ENCODE measurements at regions of chr1 and their contacts with region 1.

Region 1: DNA sequence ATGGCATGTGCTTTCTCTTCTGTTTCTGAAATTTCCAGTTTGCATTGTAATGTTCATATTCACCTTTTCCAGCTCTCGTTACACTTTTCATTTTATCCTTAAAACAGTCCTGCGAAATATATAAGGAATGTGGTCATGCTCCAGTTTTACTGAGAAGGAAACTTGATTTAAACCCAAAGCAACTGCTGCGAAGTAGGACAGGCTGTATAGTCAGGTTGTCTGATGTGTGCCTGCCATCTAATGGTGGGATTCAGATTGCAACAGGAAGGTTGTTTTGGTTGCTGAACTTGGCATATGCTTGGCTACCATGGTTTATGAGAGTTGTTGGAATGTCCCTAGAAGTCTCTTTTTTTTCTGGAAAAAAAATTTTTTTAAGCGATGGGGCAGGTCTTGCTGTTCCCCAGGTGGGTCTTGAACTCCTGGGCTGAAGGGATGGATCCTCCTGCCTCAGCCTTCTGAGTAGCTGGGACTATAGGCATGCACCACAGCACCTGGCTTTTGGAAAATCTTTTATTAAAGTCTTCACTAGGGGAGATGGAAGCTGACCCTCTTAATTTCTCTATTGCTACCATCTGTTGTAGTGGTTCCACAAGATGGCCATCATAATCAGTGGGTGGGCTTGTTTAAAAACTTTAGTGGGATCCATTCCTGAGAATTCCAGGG is 86.9 kb downstream of the UCK2 start:
- DNase-seq: peak; percentile 67
- ATAC-seq: peak; percentile 21
- H3K4me3 ChIP-seq: no peak overlapping the region
- H3K27ac ChIP-seq: no peak overlapping the region
- H3K4me1 ChIP-seq: peaks cover 63% of the 10 kb centered on the region
- H3K27me3 ChIP-seq: no peaks in the 10 kb centered on the region
- CTCF ChIP-seq: peak; percentile 92
- EP300 ChIP-seq: no peak
- POLR2A ChIP-seq: no peak
- RAD21 ChIP-seq: peak; percentile 85

Region 2: DNA sequence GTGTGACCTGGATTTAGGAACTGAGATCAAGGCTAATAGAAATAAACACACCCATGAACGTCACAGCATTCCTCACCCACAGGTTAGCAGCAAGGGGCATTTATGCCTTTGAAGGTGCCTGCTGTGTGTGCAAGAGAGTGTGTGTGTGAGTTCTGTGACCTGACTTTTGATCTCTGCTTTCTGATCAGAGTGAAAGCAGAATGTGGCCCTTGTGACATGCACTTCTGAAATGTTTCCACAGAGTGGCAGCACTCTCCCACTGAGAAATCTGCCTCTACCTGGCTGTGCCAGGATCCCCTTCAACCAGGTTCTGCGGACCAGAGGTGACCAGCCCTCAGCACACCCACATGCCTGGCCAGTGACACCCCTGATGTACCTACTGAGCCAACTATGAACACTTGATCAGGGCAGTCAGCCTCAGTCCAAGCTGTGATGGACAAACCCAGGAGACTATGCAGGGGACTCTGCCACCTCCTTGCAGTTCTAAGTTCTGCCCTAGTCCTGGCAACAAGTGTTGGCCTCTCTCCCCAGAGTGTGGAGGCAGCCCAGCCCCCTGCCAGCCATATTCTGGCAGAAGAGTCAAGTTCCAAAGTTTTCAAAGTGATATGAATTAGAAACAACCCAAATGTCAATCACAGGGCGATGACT is 510.3 kb before region 1 on chr1:
- CTCF ChIA-PET with region 1: no interaction called
- POLR2A ChIA-PET with region 1: no interaction called
- in situ Hi-C with region 1: loop called (anchors 25 kb)
- intact Hi-C with region 1: loop called (anchors 5 kb)
- DNase-seq: peak; percentile 58
- ATAC-seq: peak; percentile 91
- H3K4me3 ChIP-seq: no peak overlapping the region
- H3K27ac ChIP-seq: no peak overlapping the region
- H3K4me1 ChIP-seq: peaks cover 10% of the 10 kb centered on the region; the same call in 1 of the 2 replicates
- H3K27me3 ChIP-seq: no peaks in the 10 kb centered on the region
- CTCF ChIP-seq: peak; percentile 91
- EP300 ChIP-seq: no peak
- POLR2A ChIP-seq: no peak
- RAD21 ChIP-seq: peak; percentile 81

Region 3: GRCh38 chr1:165697881-165698760 is 216.1 kb before region 1 on chr1 and contains the start of gene ALDH9A1:
- CTCF ChIA-PET with region 1: interaction called, 6 read pairs
- POLR2A ChIA-PET with region 1: interaction called, 7 read pairs
- in situ Hi-C with region 1: loop called (anchors 5 kb)
- intact Hi-C with region 1: loop called (anchors 5 kb)
- DNase-seq: peak; percentile 32
- ATAC-seq: peak; percentile 94
- H3K4me3 ChIP-seq: peak within 1 kb of the TSS; percentile 83 to 96 (median 85)
- H3K27ac ChIP-seq: peak within 1 kb of the TSS; percentile 82
- H3K4me1 ChIP-seq: peaks cover 57% of the 10 kb centered on the region
- H3K27me3 ChIP-seq: no peaks in the 10 kb centered on the region; a peak in 2 of 5 replicates
- CTCF ChIP-seq: peak; percentile 74
- EP300 ChIP-seq: no peak
- POLR2A ChIP-seq: peak in 1 of 2 experiments; percentile 78; a peak in 2 of 4 replicates
- RAD21 ChIP-seq: no peak
- total RNA-seq, gene ALDH9A1: 38.5 and 52.7 TPM in 2 replicates

Region 4: GRCh38 chr1:165768513-165769394 is 145.5 kb before region 1 on chr1 and contains the start of gene TMCO1:
- CTCF ChIA-PET with region 1: no interaction called
- POLR2A ChIA-PET with region 1: interaction called, 31 read pairs
- in situ Hi-C with region 1: no loop called
- intact Hi-C with region 1: loop called (anchors 1 kb)
- DNase-seq: peak; percentile 99
- ATAC-seq: peak; percentile 100
- H3K4me3 ChIP-seq: peak within 1 kb of the TSS; percentile 66 to 88 (median 88)
- H3K27ac ChIP-seq: peak within 1 kb of the TSS; percentile 95
- H3K4me1 ChIP-seq: peaks cover 35% of the 10 kb centered on the region
- H3K27me3 ChIP-seq: no peaks in the 10 kb centered on the region; a peak in 1 of 5 replicates
- CTCF ChIP-seq: peak; percentile 48
- EP300 ChIP-seq: 0 out of 4 replicates have a peak, but pooled peaks of 1 of the 2 experiments have one; percentile 3
- POLR2A ChIP-seq: peak; percentile 83 to 88
- RAD21 ChIP-seq: peak; percentile 36; the same call in 1 of the 2 replicates
- total RNA-seq, gene TMCO1: 85.3 and 119 TPM in 2 replicates

Region 5: DNA sequence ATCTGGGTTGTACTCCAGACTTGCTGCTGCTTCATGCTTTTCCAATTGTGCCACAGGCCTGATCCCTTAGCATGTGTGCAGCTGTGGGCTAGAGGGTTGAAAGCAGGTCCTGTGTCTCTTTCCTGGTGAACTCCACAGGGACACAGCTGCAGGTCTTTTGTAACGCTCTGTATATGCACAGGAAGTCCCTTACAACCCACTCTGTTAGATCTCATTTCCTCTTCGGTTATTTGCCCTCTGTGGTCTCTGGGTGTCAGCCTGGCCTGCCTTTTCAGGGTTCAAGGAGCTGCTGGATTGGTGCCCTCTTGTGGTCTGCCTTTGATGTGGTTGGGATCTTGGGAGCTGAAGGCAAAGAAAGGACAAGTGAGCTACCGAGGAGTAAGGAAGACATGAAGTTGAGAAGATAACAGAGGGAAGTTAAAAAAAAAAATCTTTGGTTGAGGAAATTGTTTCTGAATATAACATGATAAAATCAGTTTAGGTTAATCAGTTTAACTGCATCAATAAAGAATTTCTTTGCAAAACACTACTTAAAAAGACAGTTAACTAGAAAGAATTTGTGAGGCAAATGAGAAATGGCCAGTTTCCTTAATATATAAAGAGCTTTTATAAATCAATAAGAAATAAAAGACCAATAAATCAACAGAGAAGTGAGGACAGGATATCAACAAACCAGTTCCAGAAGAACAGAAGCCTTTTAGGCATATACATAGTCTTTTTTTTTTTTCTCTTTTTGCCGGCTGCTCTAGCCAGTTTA is 42.8 kb before region 1 on chr1:
- CTCF ChIA-PET with region 1: interaction called, 3 read pairs
- POLR2A ChIA-PET with region 1: no interaction called
- in situ Hi-C with region 1: no loop called
- intact Hi-C with region 1: loop called (anchors 1 kb)
- DNase-seq: peak; percentile 92
- ATAC-seq: peak; percentile 99
- H3K4me3 ChIP-seq: no peak overlapping the region
- H3K27ac ChIP-seq: peak overlapping the region; percentile 67
- H3K4me1 ChIP-seq: peaks cover 35% of the 10 kb centered on the region
- H3K27me3 ChIP-seq: no peaks in the 10 kb centered on the region
- CTCF ChIP-seq: peak; percentile 92
- EP300 ChIP-seq: peak in 1 of 2 experiments; percentile 35; a peak in 1 of 4 replicates
- POLR2A ChIP-seq: no peak
- RAD21 ChIP-seq: peak; percentile 64

Region 6: DNA sequence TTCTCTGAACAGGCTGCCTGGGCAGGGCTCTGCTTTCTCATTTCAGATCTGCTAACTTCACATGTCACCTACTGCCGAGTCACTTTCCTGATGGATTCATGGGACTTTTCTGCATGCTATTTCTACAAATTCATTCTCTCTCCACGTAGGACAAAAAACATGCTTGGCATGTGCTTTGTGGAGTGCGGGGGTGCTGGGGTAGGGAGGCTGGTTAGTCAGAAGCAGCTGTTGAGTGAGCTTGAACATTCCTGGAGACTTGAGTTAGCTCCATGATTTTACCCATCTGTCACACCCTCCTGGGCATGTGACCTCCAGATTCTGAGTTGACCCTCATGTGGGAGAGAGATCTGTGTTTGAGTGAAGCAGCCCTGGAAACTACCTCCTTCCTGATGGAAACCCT is 15.4 kb before region 1 on chr1:
- CTCF ChIA-PET with region 1: no interaction called
- POLR2A ChIA-PET with region 1: interaction called, 26 read pairs
- in situ Hi-C with region 1: no loop called
- intact Hi-C with region 1: loop called (anchors 1 kb)
- DNase-seq: no peak
- ATAC-seq: no peak
- H3K4me3 ChIP-seq: no peak overlapping the region
- H3K27ac ChIP-seq: no peak overlapping the region
- H3K4me1 ChIP-seq: peaks cover 50% of the 10 kb centered on the region
- H3K27me3 ChIP-seq: no peaks in the 10 kb centered on the region
- CTCF ChIP-seq: no peak
- EP300 ChIP-seq: no peak
- POLR2A ChIP-seq: no peak
- RAD21 ChIP-seq: no peak